HCT116 (cell line): ENCODE measurements at regions of chr9 and their contacts with region 1.

Region 1: GRCh38 chr9:115524453-115525059 is 406.6 kb upstream of the TNC start:
- DNase-seq: peak; percentile 47
- ATAC-seq: peak; percentile 86
- H3K4me3 ChIP-seq: no peak overlapping the region
- H3K27ac ChIP-seq: no peak overlapping the region
- H3K4me1 ChIP-seq: no peaks in the 10 kb centered on the region
- H3K27me3 ChIP-seq: 0 out of 2 replicates have a peak, but pooled peaks cover 3% of the 10 kb centered on the region
- CTCF ChIP-seq: peak; percentile 66 to 77 (median 71); a peak in 5 of 6 replicates
- POLR2A ChIP-seq: no peak
- RAD21 ChIP-seq: peak; percentile 91

Region 2: GRCh38 chr9:115058684-115059315 is 465.8 kb before region 1 on chr9:
- CTCF ChIA-PET with region 1: no interaction called
- POLR2A ChIA-PET with region 1: no interaction called
- RAD21 ChIA-PET with region 1: no interaction called
- intact Hi-C with region 1: no loop called
- DNase-seq: no peak
- ATAC-seq: no peak
- H3K4me3 ChIP-seq: no peak overlapping the region
- H3K27ac ChIP-seq: no peak overlapping the region
- H3K4me1 ChIP-seq: peaks cover 4 to 6% of the 10 kb centered on the region in 2 experiments; a peak in 2 of 4 replicates
- H3K27me3 ChIP-seq: peaks cover 32% of the 10 kb centered on the region; the same call in 1 of the 2 replicates
- CTCF ChIP-seq: no peak
- POLR2A ChIP-seq: no peak
- RAD21 ChIP-seq: no peak

Region 3: DNA sequence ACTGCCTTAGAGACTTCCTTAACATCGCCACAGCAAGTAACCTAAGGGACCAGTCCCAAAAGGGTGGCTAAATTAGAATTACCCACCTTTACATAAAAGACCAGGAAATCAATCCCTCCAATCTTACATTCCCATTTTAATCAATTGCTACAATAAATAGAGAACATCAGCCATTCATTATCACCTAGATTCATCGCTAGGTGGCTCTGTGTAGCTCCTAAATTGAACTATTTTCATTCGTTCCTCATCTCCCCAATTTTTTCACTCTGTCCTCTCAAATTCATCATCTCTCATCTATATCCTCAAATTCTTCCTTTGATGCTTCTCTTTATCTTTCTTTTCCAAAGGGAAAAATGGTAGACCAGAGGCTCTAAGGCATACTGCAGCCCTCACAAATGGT is 298.4 kb before region 1 on chr9:
- CTCF ChIA-PET with region 1: no interaction called
- POLR2A ChIA-PET with region 1: no interaction called
- RAD21 ChIA-PET with region 1: no interaction called
- intact Hi-C with region 1: loop called (anchors 1 kb)
- DNase-seq: peak; percentile 12
- ATAC-seq: peak; percentile 70
- H3K4me3 ChIP-seq: no peak overlapping the region
- H3K27ac ChIP-seq: no peak overlapping the region
- H3K4me1 ChIP-seq: peaks cover 0 to 9% of the 10 kb centered on the region in 2 experiments; a peak in 2 of 4 replicates
- H3K27me3 ChIP-seq: peaks cover 6% of the 10 kb centered on the region; the same call in 1 of the 2 replicates
- CTCF ChIP-seq: peak; percentile 39 to 55 (median 43); a peak in 4 of 6 replicates
- POLR2A ChIP-seq: no peak
- RAD21 ChIP-seq: peak; percentile 70